Caco-2 (cell line): ENCODE measurements at regions of chr16 and their contacts with region 1.

Region 1: DNA sequence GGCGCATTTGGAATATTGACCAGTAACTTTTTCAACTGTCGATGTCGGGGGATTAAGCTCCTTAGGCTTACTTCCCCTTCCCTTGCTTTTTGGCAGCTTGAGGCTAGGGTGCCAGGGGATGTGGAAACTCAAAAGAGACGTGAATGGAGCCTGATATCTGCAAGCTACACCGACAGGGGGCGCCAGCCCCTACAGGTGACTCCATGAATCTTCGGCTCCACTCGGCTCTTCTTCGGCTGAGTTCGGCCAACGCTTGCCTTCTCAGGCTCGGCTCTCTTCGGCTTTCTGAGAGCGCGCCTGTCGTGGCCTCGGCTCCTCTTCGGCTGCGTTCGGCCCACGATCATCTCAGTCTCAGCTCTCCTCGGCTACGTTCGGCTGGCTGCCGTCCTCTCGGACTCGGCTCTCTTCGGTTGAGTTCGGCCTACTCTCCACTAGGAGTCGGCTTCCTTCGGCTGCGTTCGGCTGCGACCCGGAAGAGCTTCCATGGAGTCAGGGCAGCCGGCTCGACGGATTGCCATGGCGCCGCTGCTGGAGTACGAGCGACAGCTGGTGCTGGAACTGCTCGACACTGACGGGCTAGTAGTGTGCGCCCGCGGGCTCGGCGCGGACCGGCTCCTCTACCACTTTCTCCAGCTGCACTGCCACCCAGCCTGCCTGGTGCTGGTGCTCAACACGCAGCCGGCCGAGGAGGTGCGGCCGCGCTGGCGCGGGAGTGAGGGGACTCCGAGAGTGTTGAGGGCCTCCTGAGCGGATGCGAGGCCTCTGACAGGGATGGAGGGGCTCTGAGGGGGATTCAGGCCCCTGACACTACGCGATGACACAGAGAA is at the start of gene ERCC4:
- DNase-seq: peak; percentile 98
- H3K4me3 ChIP-seq: peak within 1 kb of the TSS; percentile 99
- H3K4me3 Mint-ChIP-seq: peak within 1 kb of the TSS; percentile 95
- H3K27ac Mint-ChIP-seq: peak within 1 kb of the TSS; percentile 94
- H3K4me1 ChIP-seq: no peaks in the 10 kb centered on the region
- H3K4me1 Mint-ChIP-seq: peaks cover 12% of the 10 kb centered on the region
- H3K27me3 ChIP-seq: no peaks in the 10 kb centered on the region
- H3K27me3 Mint-ChIP-seq: no peaks in the 10 kb centered on the region
- CTCF ChIP-seq: peak; percentile 80 to 92
- total RNA-seq, gene ERCC4: 6.8 and 7.1 TPM in 2 replicates

Region 2: GRCh38 chr16:13866073-13866472 is 53.8 kb before region 1 on chr16:
- CTCF ChIA-PET with region 1: interaction called, 19 read pairs
- POLR2A ChIA-PET with region 1: no interaction called
- intact Hi-C with region 1: loop called (anchors 1 kb)
- DNase-seq: peak; percentile 73 to 76
- H3K4me3 ChIP-seq: no peak overlapping the region
- H3K4me3 Mint-ChIP-seq: no peak overlapping the region
- H3K27ac Mint-ChIP-seq: no peak overlapping the region
- H3K4me1 ChIP-seq: no peaks in the 10 kb centered on the region
- H3K4me1 Mint-ChIP-seq: no peaks in the 10 kb centered on the region
- H3K27me3 ChIP-seq: no peaks in the 10 kb centered on the region
- H3K27me3 Mint-ChIP-seq: peaks cover 14% of the 10 kb centered on the region
- CTCF ChIP-seq: peak; percentile 72 to 85

Region 3: DNA sequence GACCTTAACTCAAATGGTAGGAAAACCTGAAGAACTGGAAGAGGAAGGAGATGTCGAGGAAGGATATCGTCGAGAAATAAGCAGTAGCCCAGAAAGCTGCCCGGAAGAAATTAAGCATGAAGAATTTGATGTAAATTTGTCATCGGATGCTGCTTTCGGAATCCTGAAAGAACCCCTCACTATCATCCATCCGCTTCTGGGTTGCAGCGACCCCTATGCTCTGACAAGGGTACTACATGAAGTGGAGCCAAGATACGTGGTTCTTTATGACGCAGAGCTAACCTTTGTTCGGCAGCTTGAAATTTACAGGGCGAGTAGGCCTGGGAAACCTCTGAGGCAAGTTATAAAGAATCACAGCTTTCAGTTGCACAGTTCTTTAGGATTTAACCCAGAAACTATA is 15.5 kb after region 1 on chr16:
- CTCF ChIA-PET with region 1: interaction called, 12 read pairs
- POLR2A ChIA-PET with region 1: no interaction called
- intact Hi-C with region 1: no loop called
- DNase-seq: peak in 1 of 2 experiments; percentile 27
- H3K4me3 ChIP-seq: no peak overlapping the region
- H3K4me3 Mint-ChIP-seq: no peak overlapping the region
- H3K27ac Mint-ChIP-seq: no peak overlapping the region
- H3K4me1 ChIP-seq: peaks cover 19% of the 10 kb centered on the region
- H3K4me1 Mint-ChIP-seq: peaks cover 6% of the 10 kb centered on the region
- H3K27me3 ChIP-seq: no peaks in the 10 kb centered on the region
- H3K27me3 Mint-ChIP-seq: no peaks in the 10 kb centered on the region
- CTCF ChIP-seq: peak; percentile 34 to 38

Region 4: GRCh38 chr16:13982451-13982850 is 62.6 kb after region 1 on chr16:
- CTCF ChIA-PET with region 1: no interaction called
- POLR2A ChIA-PET with region 1: no interaction called
- intact Hi-C with region 1: no loop called
- DNase-seq: no peak
- H3K4me3 ChIP-seq: no peak overlapping the region
- H3K4me3 Mint-ChIP-seq: no peak overlapping the region
- H3K27ac Mint-ChIP-seq: no peak overlapping the region
- H3K4me1 ChIP-seq: no peaks in the 10 kb centered on the region
- H3K4me1 Mint-ChIP-seq: no peaks in the 10 kb centered on the region
- H3K27me3 ChIP-seq: no peaks in the 10 kb centered on the region
- H3K27me3 Mint-ChIP-seq: no peaks in the 10 kb centered on the region
- CTCF ChIP-seq: no peak

Region 5: DNA sequence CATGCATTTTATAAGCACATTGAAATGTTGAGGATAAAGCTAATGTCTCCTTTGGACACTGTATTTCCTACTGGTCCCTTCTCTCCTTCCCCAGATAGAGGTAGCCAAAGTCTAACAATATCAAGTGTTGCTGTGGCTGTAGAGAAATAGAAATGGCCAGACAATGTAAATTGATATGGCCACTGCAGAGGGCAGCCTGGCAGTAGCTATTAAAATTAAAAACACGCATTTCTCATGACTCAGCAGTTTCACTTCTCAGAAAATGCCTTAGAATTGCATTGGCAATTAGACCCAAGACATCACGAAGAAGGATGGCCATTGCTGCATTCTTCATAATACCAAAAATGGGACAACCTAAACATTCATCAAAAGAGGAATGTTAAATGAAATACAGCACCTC is 104.4 kb after region 1 on chr16:
- CTCF ChIA-PET with region 1: no interaction called
- POLR2A ChIA-PET with region 1: no interaction called
- intact Hi-C with region 1: no loop called
- DNase-seq: no peak
- H3K4me3 ChIP-seq: no peak overlapping the region
- H3K4me3 Mint-ChIP-seq: no peak overlapping the region
- H3K27ac Mint-ChIP-seq: no peak overlapping the region
- H3K4me1 ChIP-seq: no peaks in the 10 kb centered on the region
- H3K4me1 Mint-ChIP-seq: no peaks in the 10 kb centered on the region
- H3K27me3 ChIP-seq: no peaks in the 10 kb centered on the region
- H3K27me3 Mint-ChIP-seq: no peaks in the 10 kb centered on the region
- CTCF ChIP-seq: no peak

Region 6: DNA sequence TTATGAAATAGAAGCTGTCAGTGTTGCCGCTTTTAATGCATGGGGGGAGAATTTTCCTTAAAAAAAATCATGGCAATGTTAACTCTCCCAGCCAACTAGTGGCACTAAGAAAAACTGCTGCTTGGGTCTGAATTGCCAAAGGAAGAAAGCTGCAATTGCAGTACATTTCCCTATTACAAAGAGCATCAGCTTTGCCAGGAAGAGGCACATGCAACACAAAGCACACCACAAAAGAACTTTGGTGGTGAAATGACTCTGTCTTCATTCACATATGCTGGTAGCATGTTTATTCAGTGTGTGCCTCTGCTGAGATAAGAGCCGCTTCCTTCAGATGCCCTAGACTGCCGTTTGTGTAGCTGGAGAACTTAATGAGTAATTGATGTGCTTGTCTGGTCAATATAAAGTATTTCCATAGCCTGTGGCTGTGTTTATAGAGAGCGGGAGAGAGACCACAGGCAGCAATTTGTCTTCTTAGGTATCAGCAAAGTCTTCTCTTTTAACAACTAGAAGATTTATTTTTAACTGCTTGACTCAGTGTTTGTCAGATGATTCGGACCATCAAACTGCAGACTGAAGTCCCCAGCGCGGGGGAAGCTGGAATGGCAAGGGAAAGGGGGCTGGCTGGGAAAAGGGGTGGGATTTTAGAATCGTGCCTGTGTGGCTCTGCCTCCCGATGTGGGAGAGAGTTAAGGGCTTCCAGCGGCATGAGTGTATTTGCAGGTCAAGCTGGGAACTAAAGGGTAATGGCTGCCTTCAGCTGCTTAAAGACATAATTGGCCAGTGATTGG is 266.3 kb after region 1 on chr16:
- CTCF ChIA-PET with region 1: interaction called, 6 read pairs
- POLR2A ChIA-PET with region 1: no interaction called
- intact Hi-C with region 1: loop called (anchors 5 kb)
- DNase-seq: no peak
- H3K4me3 ChIP-seq: no peak overlapping the region
- H3K4me3 Mint-ChIP-seq: peak overlapping the region; percentile 41
- H3K27ac Mint-ChIP-seq: no peak overlapping the region
- H3K4me1 ChIP-seq: peaks cover 19% of the 10 kb centered on the region
- H3K4me1 Mint-ChIP-seq: peaks cover 23% of the 10 kb centered on the region
- H3K27me3 ChIP-seq: no peaks in the 10 kb centered on the region
- H3K27me3 Mint-ChIP-seq: no peaks in the 10 kb centered on the region
- CTCF ChIP-seq: peak; percentile 22 to 30

Region 7: DNA sequence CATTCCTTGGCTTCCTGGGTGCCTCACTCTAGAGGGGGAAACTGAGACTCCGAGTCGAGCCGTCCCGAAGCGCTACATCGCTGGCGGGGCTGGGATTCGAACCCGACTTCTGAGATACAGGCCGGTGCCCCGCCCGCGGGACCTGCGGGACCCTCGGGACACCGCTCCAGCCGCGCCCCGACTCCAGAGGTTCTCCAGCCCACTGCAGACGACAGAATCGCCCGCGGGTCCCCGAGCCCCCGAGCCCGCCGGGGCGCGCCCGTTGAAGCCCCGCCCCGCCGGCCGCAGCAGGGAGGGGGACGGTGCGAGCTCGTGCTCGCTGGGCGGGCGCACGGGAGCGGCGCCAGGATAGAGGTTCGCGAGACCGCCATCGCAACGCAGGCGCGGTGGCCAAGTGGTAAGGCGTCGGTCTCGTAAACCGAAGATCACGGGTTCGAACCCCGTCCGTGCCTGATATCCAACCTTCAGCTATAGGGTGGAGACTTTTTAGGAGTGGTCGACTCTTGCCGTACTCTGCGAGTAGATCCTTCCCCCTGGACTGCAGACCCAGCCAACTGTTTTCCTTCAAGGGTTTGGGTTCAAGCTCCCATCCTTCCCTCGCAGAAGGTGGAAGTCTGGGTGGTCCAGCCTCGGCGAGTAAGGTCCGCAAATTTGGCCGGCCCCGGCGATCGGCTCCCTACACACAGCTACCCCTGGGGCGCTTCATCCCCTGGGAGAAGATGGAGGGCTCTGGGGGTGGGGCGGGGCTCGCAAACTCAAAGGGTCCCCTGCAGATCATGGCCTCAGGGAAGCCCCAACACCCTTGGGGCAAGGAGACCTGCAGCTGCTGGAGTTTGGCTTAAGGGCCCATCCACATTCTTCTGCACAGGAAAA is 365.9 kb after region 1 on chr16:
- CTCF ChIA-PET with region 1: interaction called, 17 read pairs
- POLR2A ChIA-PET with region 1: no interaction called
- intact Hi-C with region 1: loop called (anchors 1 kb)
- DNase-seq: peak; percentile 91 to 94
- H3K4me3 ChIP-seq: peak overlapping the region; percentile 88
- H3K4me3 Mint-ChIP-seq: peak overlapping the region; percentile 81
- H3K27ac Mint-ChIP-seq: peak overlapping the region; percentile 69
- H3K4me1 ChIP-seq: peaks cover 7% of the 10 kb centered on the region
- H3K4me1 Mint-ChIP-seq: peaks cover 7% of the 10 kb centered on the region
- H3K27me3 ChIP-seq: no peaks in the 10 kb centered on the region
- H3K27me3 Mint-ChIP-seq: no peaks in the 10 kb centered on the region
- CTCF ChIP-seq: no peak